Psoas muscle (tissue), 8 donors: ENCODE measurements at regions of chr2 and their contacts with region 1.

Region 1: DNA sequence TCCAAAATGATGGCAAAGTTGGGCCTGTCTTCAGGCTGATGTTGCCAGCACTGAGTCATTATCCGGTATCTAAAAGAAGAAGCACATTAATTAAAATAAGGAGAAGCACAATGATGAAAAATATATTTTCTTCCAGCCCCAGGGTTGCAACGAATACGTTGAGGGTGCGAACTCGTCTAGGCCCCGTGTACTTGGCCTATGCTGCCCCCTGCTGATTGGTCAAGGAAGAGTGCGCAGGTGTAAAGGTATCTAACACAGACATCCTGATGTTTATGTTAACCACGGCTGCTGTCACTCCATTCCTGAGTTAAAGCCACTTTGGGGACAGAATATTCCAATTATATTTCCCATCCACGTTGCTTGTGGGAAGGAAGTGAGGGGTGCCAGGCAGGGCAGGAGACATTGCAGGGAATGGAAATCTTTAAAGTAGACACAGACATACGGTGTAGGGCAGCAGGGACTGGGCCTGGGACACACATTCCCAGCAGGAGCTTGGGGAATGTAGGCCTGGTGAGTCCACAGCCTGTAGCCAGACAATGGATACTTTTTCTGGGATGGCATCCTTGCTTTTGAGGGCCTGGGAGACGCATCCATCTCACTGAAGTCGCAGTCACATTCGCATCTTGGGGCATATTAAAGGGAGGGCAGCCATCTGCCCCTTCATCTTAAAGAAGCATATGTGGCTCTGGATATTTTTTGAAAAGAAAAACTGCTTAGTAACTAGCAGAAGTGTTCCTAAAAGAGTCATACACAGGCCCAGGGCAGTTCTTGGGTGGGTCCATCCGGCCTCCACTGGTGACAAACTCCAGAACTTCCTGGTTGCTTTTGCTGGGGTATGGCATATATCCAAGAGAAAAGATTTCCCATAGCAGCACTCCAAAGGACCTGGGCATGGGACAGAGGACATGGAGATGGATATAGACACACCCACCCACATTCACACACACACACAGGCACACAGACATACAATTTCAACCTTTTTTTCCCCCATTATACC is 81.9 kb downstream of the CLIP4 start:
- DNase-seq: peak; percentile 53 to 76
- ATAC-seq: peak; percentile 86 to 92 (median 88)
- H3K4me3 ChIP-seq: no peak overlapping the region
- H3K27ac ChIP-seq: no peak overlapping the region
- H3K4me1 ChIP-seq: no peaks in the 10 kb centered on the region
- H3K27me3 ChIP-seq: no peaks in the 10 kb centered on the region
- CTCF ChIP-seq: peak; percentile 76

Region 2: GRCh38 chr2:28801726-28802487 is 395.2 kb before region 1 on chr2:
- intact Hi-C with region 1: no loop called
- DNase-seq: no peak
- ATAC-seq: peak; percentile 56 to 73 (median 66)
- H3K4me3 ChIP-seq: no peak overlapping the region
- H3K27ac ChIP-seq: peak overlapping the region; percentile 36
- H3K4me1 ChIP-seq: peaks cover 15% of the 10 kb centered on the region
- H3K27me3 ChIP-seq: no peaks in the 10 kb centered on the region
- CTCF ChIP-seq: no peak

Region 3: DNA sequence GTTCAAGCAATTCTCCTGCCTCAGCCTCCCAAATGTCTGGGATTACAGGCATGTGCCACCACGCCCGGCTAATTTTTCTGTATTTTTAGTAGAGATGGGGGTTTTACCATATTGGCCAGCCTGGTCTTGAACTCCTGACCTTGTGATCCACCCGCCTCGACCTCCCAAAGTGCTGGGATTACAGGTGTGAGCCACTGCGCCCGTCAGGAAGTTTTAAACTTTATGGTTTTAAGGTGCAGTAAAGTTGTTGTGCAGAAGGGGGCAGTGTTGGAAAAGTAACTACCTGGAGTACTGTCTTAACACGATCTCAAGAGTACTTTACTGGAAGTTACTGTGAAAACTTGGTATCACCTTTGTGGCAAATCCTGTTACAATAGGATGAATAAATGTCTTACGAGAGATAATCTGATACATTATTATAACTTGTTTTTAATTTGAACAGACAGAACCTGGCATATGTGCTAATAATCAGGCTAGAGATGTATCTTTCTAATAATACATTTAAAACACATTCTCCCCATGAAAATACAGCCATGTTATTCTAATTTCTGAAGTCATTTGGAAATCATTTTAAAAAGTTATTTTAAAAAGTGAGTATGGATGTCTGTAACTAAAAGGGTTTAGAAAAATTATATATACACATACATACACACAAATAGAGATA is 375.7 kb before region 1 on chr2:
- intact Hi-C with region 1: loop called (anchors 2 to 10 kb)
- DNase-seq: no peak
- ATAC-seq: peak; percentile 64 to 92 (median 88)
- H3K4me3 ChIP-seq: no peak overlapping the region
- H3K27ac ChIP-seq: no peak overlapping the region
- H3K4me1 ChIP-seq: no peaks in the 10 kb centered on the region
- H3K27me3 ChIP-seq: no peaks in the 10 kb centered on the region
- CTCF ChIP-seq: peak; percentile 70

Region 4: GRCh38 chr2:28958689-28959088 is 238.4 kb before region 1 on chr2:
- intact Hi-C with region 1: loop called (anchors 1 to 2 kb)
- DNase-seq: peak; percentile 64 to 87
- ATAC-seq: peak; percentile 88 to 92 (median 89)
- H3K4me3 ChIP-seq: no peak overlapping the region
- H3K27ac ChIP-seq: no peak overlapping the region
- H3K4me1 ChIP-seq: peaks cover 5% of the 10 kb centered on the region
- H3K27me3 ChIP-seq: no peaks in the 10 kb centered on the region
- CTCF ChIP-seq: peak; percentile 68

Region 5: GRCh38 chr2:29059624-29060023 is 137.5 kb before region 1 on chr2:
- intact Hi-C with region 1: loop called in 1 of 2 experiments (anchors 5 kb)
- DNase-seq: no peak
- ATAC-seq: no peak
- H3K4me3 ChIP-seq: no peak overlapping the region
- H3K27ac ChIP-seq: no peak overlapping the region
- H3K4me1 ChIP-seq: peaks cover 12% of the 10 kb centered on the region
- H3K27me3 ChIP-seq: no peaks in the 10 kb centered on the region
- CTCF ChIP-seq: no peak

Region 6: GRCh38 chr2:29351916-29352591 is 155.0 kb after region 1 on chr2:
- intact Hi-C with region 1: no loop called
- DNase-seq: no peak
- ATAC-seq: no peak
- H3K4me3 ChIP-seq: no peak overlapping the region
- H3K27ac ChIP-seq: no peak overlapping the region
- H3K4me1 ChIP-seq: no peaks in the 10 kb centered on the region
- H3K27me3 ChIP-seq: no peaks in the 10 kb centered on the region
- CTCF ChIP-seq: no peak